ENCODE measurements at regions of chr7 and their contacts with region 1.

Region 1: GRCh38 chr7:142352543-142352942 is 94.7 kb upstream of the PRSS58 start:
- DNase-seq: no peak
- CTCF ChIP-seq: no peak

Region 2: GRCh38 chr7:141722529-141722928 is 630.0 kb before region 1 on chr7:
- CTCF ChIA-PET with region 1: no interaction called
- POLR2A ChIA-PET with region 1: no interaction called
- DNase-seq: no peak
- CTCF ChIP-seq: no peak

Region 3: GRCh38 chr7:142063551-142064442 is 288.7 kb before region 1 on chr7:
- CTCF ChIA-PET with region 1: no interaction called
- POLR2A ChIA-PET with region 1: no interaction called
- DNase-seq: no peak
- CTCF ChIP-seq: no peak

Region 4: GRCh38 chr7:142323706-142324105 is 28.8 kb before region 1 on chr7:
- CTCF ChIA-PET with region 1: no interaction called
- POLR2A ChIA-PET with region 1: no interaction called
- DNase-seq: no peak
- CTCF ChIP-seq: peak; percentile 23

Region 5: DNA sequence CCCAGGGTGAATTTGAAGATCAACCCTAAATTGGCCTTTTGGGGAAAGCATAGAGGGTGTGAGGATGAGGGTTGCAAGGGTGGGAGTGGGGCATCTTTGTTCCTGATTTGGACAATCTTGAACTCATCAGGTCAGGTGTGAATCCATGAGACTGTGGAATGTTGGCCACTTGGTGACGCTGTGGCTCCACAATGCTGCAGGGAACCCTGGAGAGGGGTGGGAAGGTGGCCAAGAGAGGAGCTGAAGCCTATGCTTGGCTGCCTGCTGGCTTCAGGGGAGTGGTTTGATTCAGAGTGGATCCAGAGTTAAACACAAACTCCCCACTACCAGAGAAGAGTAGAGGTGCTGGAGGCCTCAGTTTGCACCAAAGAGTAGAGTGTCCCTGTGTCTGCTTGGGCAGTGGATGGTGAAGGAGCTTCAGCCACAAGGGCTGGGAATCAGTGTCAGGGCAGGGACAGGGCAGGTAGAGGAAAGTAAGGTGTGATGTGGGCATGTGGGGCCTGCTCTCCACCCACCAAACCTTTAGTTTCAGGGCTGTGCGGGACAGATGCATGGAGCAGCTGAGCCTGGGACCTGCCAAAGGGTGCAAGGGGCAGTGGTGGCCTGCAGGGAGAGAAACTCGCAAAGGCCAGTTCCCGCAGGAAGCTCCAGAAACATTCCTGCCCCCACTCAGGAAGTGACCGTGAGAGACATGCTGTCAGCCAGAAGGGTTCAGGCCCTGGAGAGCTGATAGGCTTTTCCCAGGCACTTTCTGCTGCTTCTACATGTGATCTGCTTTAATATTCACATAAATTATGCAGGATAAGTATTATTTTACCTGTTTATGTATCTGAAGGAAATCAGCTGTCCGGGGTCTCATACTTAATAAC is 13.7 kb before region 1 on chr7:
- CTCF ChIA-PET with region 1: interaction called, 10 read pairs
- POLR2A ChIA-PET with region 1: no interaction called
- DNase-seq: no peak
- CTCF ChIP-seq: no peak

Measured in GM10248 (cell line).